Dorsolateral prefrontal cortex (tissue), 120 donors: ENCODE measurements at regions of chr12 and their contacts with region 1.

Region 1: DNA sequence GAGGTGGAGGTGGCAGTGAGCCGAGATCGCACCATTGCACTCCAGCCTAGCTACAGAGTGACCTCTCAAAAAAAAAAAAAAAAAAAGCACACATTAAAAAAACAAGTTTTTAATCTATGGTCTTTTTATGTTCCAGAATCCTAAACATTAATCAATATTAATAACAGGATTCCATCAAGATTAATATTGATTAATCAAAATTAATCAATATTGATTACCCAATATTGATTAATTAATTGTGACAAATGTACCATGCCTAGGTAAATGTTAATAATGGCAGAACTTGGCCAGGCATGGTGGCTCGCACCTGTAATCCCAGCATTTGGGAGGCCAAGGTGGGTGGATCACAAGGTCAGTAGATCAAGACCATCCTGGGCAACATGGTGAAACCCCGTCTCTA is 7.9 kb upstream of the NANOG start:
- DNase-seq: no peak
- H3K4me3 ChIP-seq: no peak overlapping the region
- H3K27ac ChIP-seq: no peak overlapping the region
- H3K27me3 ChIP-seq: no peaks in the 10 kb centered on the region
- CTCF ChIP-seq: no peak

Region 2: DNA sequence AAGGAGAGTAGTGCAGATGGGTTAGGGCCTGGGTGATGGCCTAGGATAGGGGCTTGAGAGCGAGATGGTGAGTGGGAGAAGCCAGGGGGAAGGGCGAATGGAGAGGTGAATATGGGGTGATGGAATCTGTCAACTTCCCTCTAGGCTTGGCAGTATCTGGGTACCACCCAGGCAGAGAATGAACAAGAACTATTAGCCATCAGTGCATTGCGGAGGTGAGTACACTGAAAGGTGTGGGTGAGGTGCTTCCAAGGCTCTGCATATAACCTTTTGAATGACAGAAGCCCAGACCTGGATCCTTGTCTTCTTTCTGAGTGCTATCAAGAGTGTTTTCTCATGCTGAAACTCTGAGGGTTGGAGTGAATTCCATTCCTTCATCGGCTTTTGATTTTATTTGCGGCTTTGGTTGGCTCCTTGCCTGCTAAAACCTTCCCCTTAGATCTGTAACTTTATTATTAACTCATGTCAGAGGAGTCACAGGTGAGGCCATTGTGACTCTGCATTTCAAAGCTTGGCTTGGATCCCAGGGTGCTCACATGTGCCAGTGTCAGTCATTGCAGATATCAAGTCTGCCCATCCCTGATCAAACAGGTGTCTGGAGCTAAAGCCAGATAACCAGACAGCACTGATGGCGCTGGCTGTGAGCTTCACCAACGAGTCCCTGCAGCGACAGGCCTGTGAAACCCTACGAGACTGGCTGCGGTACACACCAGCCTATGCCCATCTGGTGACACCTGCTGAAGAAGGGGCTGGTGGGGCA is 573.2 kb before region 1 on chr12:
- intact Hi-C with region 1: no loop called
- DNase-seq: no peak
- H3K4me3 ChIP-seq: no peak overlapping the region
- H3K27ac ChIP-seq: no peak overlapping the region
- H3K27me3 ChIP-seq: no peaks in the 10 kb centered on the region
- CTCF ChIP-seq: no peak

Region 3: GRCh38 chr12:7712841-7713442 is 68.3 kb before region 1 on chr12:
- intact Hi-C with region 1: loop called in 1 of 2 experiments (anchors 2 kb)
- DNase-seq: no peak
- H3K4me3 ChIP-seq: no peak overlapping the region
- H3K27ac ChIP-seq: no peak overlapping the region
- H3K27me3 ChIP-seq: peaks cover 0 to 5% (median 0%) of the 10 kb centered on the region in 45 donors
- CTCF ChIP-seq: no peak